ENCODE measurements at regions of chr7 and their contacts with region 1.

Region 1: GRCh38 chr7:111855161-111855856 is 293.0 kb upstream of the IMMP2L start:
- DNase-seq: peak; percentile 68
- H3K4me3 Mint-ChIP-seq: no peak overlapping the region
- H3K27ac Mint-ChIP-seq: no peak overlapping the region
- H3K4me1 Mint-ChIP-seq: peaks cover 9% of the 10 kb centered on the region
- H3K27me3 Mint-ChIP-seq: no peaks in the 10 kb centered on the region
- CTCF ChIP-seq: peak; percentile 43

Region 2: DNA sequence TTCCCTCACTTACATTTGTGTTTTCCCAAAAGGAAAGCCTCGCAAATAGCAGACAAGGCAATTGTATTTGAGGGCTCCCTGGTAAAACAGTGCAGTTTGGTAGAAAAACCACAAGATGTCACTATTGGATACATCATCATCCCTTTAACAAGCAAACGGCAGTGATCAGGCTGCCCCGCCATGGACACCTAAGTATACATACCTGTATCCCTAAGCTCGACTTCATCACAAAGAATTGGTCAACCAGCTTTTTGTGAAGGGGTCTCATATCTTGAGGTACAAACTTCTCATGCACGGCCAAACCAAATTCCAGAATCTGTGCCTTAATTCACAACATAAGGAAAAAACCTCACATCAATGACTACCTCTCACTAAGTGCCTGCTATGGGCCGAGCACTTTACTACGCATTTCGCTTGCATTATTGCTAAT is 113.5 kb before region 1 on chr7:
- CTCF ChIA-PET with region 1: interaction called, 50 read pairs
- POLR2A ChIA-PET with region 1: interaction called, 6 read pairs
- intact Hi-C with region 1: no loop called
- DNase-seq: peak; percentile 78
- H3K4me3 Mint-ChIP-seq: no peak overlapping the region
- H3K27ac Mint-ChIP-seq: no peak overlapping the region
- H3K4me1 Mint-ChIP-seq: no peaks in the 10 kb centered on the region
- H3K27me3 Mint-ChIP-seq: no peaks in the 10 kb centered on the region
- CTCF ChIP-seq: peak; percentile 64

Region 3: GRCh38 chr7:111763221-111763801 is 92.0 kb before region 1 on chr7:
- CTCF ChIA-PET with region 1: interaction called, 286 read pairs
- POLR2A ChIA-PET with region 1: interaction called, 4 read pairs
- intact Hi-C with region 1: loop called (anchors 1 kb)
- DNase-seq: peak; percentile 63
- H3K4me3 Mint-ChIP-seq: no peak overlapping the region
- H3K27ac Mint-ChIP-seq: no peak overlapping the region
- H3K4me1 Mint-ChIP-seq: no peaks in the 10 kb centered on the region
- H3K27me3 Mint-ChIP-seq: no peaks in the 10 kb centered on the region
- CTCF ChIP-seq: peak; percentile 50

Region 4: DNA sequence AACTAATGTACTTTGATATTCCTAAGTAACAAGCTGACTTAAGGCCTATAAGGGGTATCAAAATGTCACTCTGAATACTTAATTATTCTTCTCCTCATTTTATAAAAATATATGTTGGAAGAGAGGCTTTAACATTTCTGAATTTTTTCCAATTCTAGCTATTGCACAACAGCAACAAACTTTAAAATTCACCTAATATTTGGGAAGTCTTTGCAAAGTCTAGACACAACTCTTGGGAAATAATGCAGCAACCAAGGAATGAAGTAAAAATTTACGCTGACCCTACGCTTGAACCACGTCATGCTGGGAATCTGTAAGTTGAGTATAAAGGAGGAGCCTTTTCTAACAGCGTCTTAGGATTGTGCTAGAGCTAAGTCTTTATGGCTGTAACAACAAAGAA is 49.1 kb before region 1 on chr7:
- CTCF ChIA-PET with region 1: interaction called, 10 read pairs
- POLR2A ChIA-PET with region 1: interaction called, 3 read pairs
- intact Hi-C with region 1: no loop called
- DNase-seq: no peak
- H3K4me3 Mint-ChIP-seq: no peak overlapping the region
- H3K27ac Mint-ChIP-seq: no peak overlapping the region
- H3K4me1 Mint-ChIP-seq: peaks cover 8% of the 10 kb centered on the region
- H3K27me3 Mint-ChIP-seq: no peaks in the 10 kb centered on the region
- CTCF ChIP-seq: no peak

Region 5: GRCh38 chr7:111841596-111842205 is 13.6 kb before region 1 on chr7:
- CTCF ChIA-PET with region 1: interaction called, 69 read pairs
- POLR2A ChIA-PET with region 1: no interaction called
- intact Hi-C with region 1: no loop called
- DNase-seq: no peak
- H3K4me3 Mint-ChIP-seq: no peak overlapping the region
- H3K27ac Mint-ChIP-seq: no peak overlapping the region
- H3K4me1 Mint-ChIP-seq: no peaks in the 10 kb centered on the region
- H3K27me3 Mint-ChIP-seq: no peaks in the 10 kb centered on the region
- CTCF ChIP-seq: no peak

Region 6: DNA sequence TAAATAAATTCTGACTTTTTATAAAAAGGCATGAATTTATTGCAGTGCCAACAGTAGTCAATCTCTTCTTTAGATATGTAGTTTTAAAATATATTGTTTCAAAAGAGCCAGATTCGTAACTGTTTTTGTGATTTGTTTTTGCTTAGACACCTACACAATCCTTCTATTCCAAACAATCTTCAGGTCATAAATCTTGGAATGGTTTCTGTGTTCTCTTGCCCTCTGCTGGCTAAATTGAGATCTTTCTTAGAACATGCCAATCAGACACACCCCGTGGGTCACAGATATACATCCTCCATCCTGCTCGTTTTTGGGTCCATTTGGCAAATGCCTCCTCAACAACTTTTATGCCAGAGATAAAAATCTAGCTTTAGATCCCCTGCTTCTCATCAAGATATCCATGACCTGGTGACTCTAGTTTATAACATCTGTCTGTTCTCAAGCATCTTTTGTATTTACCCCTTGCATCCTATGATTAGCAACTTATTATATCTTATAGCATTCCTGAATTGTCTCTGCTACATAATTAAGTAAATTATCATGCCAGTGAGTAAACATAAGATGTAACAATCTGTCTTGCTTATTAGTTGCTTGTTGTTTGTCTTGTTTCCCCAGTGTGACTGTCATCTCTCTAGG is 559.7 kb after region 1 on chr7:
- CTCF ChIA-PET with region 1: interaction called, 13 read pairs
- POLR2A ChIA-PET with region 1: no interaction called
- intact Hi-C with region 1: loop called (anchors 2 kb)
- DNase-seq: peak; percentile 64
- H3K4me3 Mint-ChIP-seq: no peak overlapping the region
- H3K27ac Mint-ChIP-seq: no peak overlapping the region
- H3K4me1 Mint-ChIP-seq: peaks cover 9% of the 10 kb centered on the region
- H3K27me3 Mint-ChIP-seq: no peaks in the 10 kb centered on the region
- CTCF ChIP-seq: peak; percentile 54

Measured in MCF 10A (cell line).